ENCODE measurements at regions of chr12 and their contacts with region 1.

Region 1: GRCh38 chr12:45990468-45991283 is at the start of gene SCAF11:
- DNase-seq: peak; percentile 100
- ATAC-seq: peak; percentile 79
- H3K4me3 Mint-ChIP-seq: peak within 1 kb of the TSS; percentile 93
- H3K27ac Mint-ChIP-seq: peak within 1 kb of the TSS; percentile 100
- H3K4me1 Mint-ChIP-seq: peaks cover 34% of the 10 kb centered on the region
- H3K27me3 Mint-ChIP-seq: no peaks in the 10 kb centered on the region
- total RNA-seq, gene SCAF11: 132 to 145 TPM

Region 2: GRCh38 chr12:45234139-45234846 is 756.4 kb before region 1 on chr12:
- CTCF ChIA-PET with region 1: no interaction called
- POLR2A ChIA-PET with region 1: no interaction called
- intact Hi-C with region 1: loop called in 1 of 2 experiments (anchors 10 kb)
- DNase-seq: no peak
- ATAC-seq: peak; percentile 60
- H3K4me3 Mint-ChIP-seq: peak overlapping the region; percentile 4
- H3K27ac Mint-ChIP-seq: peak overlapping the region; percentile 85
- H3K4me1 Mint-ChIP-seq: peaks cover 69% of the 10 kb centered on the region
- H3K27me3 Mint-ChIP-seq: no peaks in the 10 kb centered on the region

Region 3: GRCh38 chr12:45582986-45583659 is 407.6 kb before region 1 on chr12:
- CTCF ChIA-PET with region 1: no interaction called
- POLR2A ChIA-PET with region 1: no interaction called
- intact Hi-C with region 1: no loop called
- DNase-seq: no peak
- ATAC-seq: no peak
- H3K4me3 Mint-ChIP-seq: no peak overlapping the region
- H3K27ac Mint-ChIP-seq: no peak overlapping the region
- H3K4me1 Mint-ChIP-seq: no peaks in the 10 kb centered on the region
- H3K27me3 Mint-ChIP-seq: peaks cover 7% of the 10 kb centered on the region

Region 4: GRCh38 chr12:45728630-45729232 is 261.9 kb before region 1 on chr12:
- CTCF ChIA-PET with region 1: interaction called, 5 read pairs
- POLR2A ChIA-PET with region 1: interaction called, 4 read pairs
- intact Hi-C with region 1: loop called (anchors 1 kb)
- DNase-seq: peak; percentile 97
- ATAC-seq: peak; percentile 73
- H3K4me3 Mint-ChIP-seq: peak overlapping the region; percentile 98
- H3K27ac Mint-ChIP-seq: peak overlapping the region; percentile 99
- H3K4me1 Mint-ChIP-seq: peaks cover 16% of the 10 kb centered on the region
- H3K27me3 Mint-ChIP-seq: no peaks in the 10 kb centered on the region

Region 5: GRCh38 chr12:46217541-46218321 is 227.1 kb after region 1 on chr12:
- CTCF ChIA-PET with region 1: no interaction called
- POLR2A ChIA-PET with region 1: interaction called, 4 read pairs
- intact Hi-C with region 1: loop called (anchors 2 kb)
- DNase-seq: peak; percentile 73
- ATAC-seq: no peak
- H3K4me3 Mint-ChIP-seq: peak overlapping the region; percentile 37
- H3K27ac Mint-ChIP-seq: peak overlapping the region; percentile 88
- H3K4me1 Mint-ChIP-seq: peaks cover 95% of the 10 kb centered on the region
- H3K27me3 Mint-ChIP-seq: no peaks in the 10 kb centered on the region

Region 6: DNA sequence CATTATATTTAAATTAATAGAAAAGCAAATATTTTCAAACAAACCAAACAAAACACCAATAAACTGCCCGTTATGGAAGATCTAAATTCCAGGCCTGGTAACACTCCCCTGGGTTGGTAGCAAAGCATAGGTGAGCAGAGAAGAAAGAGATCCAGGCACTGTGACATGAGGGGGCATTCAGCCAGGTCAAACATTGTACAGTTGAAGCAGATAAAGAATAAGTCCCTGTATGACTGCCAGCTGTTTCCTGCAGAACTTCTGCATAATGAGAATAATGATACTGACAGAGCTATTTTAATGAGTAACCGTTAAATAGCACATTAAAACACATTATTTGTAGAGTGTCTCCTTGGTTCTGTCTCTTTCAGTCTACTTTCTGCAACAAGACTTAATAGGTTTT is 242.7 kb after region 1 on chr12:
- CTCF ChIA-PET with region 1: no interaction called
- POLR2A ChIA-PET with region 1: no interaction called
- intact Hi-C with region 1: no loop called
- DNase-seq: no peak
- ATAC-seq: no peak
- H3K4me3 Mint-ChIP-seq: no peak overlapping the region
- H3K27ac Mint-ChIP-seq: no peak overlapping the region
- H3K4me1 Mint-ChIP-seq: peaks cover 77% of the 10 kb centered on the region
- H3K27me3 Mint-ChIP-seq: no peaks in the 10 kb centered on the region

Region 7: DNA sequence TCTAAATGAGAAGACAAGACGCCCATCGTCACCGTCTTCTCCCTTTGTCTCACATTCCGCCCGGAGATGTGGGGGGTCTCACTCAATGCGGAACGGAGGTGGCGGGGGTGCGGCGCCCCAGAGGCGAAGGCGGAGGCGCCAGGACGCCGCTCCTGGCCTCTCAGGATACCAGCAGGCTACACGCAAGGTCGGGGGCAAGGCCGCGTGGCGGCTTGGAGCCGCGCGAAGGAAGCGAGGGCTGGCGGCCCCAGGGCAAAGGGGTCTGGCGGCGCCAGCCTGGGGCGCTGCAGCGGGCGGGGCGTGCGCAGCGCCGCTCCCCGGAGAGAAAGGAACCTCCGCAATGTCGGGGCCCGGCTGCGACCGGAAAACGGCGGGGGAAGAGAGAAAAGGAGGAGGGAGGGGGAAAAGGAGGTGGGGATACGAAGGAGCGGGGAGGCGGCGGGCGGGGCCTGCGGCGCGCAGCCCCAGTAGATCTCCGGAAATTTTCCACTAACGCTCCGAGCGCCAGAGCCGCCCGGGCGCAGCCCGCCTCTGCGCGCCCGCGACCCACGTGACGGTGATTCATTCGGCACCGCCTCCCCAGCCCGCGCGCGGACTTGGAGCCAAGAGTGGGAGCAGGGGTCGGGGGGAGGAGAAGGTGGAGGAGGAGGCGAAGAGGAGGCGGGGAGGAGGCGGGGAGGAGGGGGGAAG is 392.4 kb after region 1 on chr12:
- CTCF ChIA-PET with region 1: no interaction called
- POLR2A ChIA-PET with region 1: no interaction called
- intact Hi-C with region 1: loop called in 1 of 2 experiments (anchors 1 kb)
- DNase-seq: peak; percentile 97
- ATAC-seq: peak; percentile 83
- H3K4me3 Mint-ChIP-seq: peak overlapping the region; percentile 74
- H3K27ac Mint-ChIP-seq: peak overlapping the region; percentile 89
- H3K4me1 Mint-ChIP-seq: peaks cover 39% of the 10 kb centered on the region
- H3K27me3 Mint-ChIP-seq: no peaks in the 10 kb centered on the region

Region 8: GRCh38 chr12:47079468-47079980 is 1088.8 kb after region 1 on chr12 and contains the starts of genes AMIGO2 and PCED1B:
- CTCF ChIA-PET with region 1: no interaction called
- POLR2A ChIA-PET with region 1: no interaction called
- intact Hi-C with region 1: loop called in 1 of 2 experiments (anchors 5 kb)
- DNase-seq: peak; percentile 85
- ATAC-seq: peak; percentile 59
- H3K4me3 Mint-ChIP-seq: peak within 1 kb of the TSS; percentile 96
- H3K27ac Mint-ChIP-seq: peak within 1 kb of the TSS; percentile 96
- H3K4me1 Mint-ChIP-seq: peaks cover 73% of the 10 kb centered on the region
- H3K27me3 Mint-ChIP-seq: no peaks in the 10 kb centered on the region
- total RNA-seq, gene AMIGO2: 15.1 to 17.1 TPM
- total RNA-seq, gene PCED1B: 76.3 to 82.3 TPM